H1 (cell line): ENCODE measurements at regions of chr16 and their contacts with region 1.

Region 1: DNA sequence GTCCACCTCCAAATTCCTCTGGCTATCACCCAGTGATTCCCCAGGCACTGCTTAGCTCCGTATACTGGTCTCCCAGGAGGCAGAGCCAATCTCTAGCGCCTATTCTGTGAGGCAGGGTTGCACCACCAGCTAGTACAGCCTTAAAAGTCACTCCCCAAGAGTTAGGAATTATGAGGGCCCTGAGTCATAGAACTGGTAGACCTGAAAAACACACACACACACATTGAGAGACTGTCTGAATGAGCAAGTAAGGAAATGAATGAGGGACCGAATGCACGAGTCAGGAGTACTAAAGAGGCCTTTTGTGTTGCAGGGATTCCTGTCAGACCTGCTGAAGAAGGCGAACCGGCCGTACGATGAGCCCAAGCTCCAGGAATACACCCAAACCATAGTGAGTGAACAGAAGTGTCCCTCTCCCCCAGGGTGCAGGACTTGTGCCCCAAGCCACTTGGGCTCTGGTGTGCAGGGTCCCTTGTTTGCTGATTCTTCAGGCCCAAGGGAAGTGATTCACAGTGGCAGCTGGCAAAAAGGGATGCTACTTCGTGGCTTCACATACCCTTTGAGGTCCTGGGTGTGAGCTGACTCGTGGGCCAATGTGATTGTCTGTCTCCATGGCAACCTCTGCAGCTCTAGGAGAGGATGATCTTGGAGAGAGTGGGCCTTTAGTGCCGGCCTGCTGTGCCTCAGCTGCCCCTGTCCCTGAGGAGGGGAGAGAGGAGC is 24.7 kb downstream of the CALB2 start:
- DNase-seq: no peak
- H3K4me3 ChIP-seq: no peak overlapping the region
- H3K27ac ChIP-seq: no peak overlapping the region
- H3K4me1 ChIP-seq: peaks cover 12 to 20% (median 16%) of the 10 kb centered on the region in 4 experiments; a peak in 5 of 7 replicates
- H3K27me3 ChIP-seq: 0 out of 7 replicates have a peak, but pooled peaks cover 0 to 2% (median 0%) of the 10 kb centered on the region in 4 experiments
- CTCF ChIP-seq: no peak
- EP300 ChIP-seq: no peak
- POLR2A ChIP-seq: no peak
- RAD21 ChIP-seq: no peak

Region 2: GRCh38 chr16:71242601-71243000 is 140.6 kb before region 1 on chr16:
- CTCF ChIA-PET with region 1: no interaction called
- POLR2A ChIA-PET with region 1: no interaction called
- DNase-seq: no peak
- H3K4me3 ChIP-seq: no peak overlapping the region
- H3K27ac ChIP-seq: no peak overlapping the region
- H3K4me1 ChIP-seq: no peaks in the 10 kb centered on the region
- H3K27me3 ChIP-seq: no peaks in the 10 kb centered on the region
- CTCF ChIP-seq: no peak
- EP300 ChIP-seq: no peak
- POLR2A ChIP-seq: no peak
- RAD21 ChIP-seq: no peak

Region 3: DNA sequence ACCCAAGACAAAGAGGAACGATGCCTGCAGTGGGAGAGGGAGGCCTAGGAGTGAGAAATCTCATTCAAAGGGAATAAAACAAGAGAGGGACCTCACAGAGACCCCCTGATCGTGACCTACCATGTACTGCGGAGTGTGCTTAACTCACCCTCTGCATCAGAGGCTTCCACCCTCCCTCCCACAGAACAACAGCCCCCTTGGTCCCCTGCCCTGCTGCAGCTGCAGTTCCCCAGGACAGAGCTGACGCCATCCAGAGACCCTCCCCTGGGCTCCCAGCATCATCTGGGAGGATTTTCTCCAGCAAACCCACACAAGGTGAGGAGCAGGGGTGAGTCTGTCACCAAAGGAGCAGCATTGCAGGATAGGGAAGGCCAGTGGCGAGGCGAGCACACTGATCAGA is 18.8 kb after region 1 on chr16:
- CTCF ChIA-PET with region 1: interaction called, 9 read pairs
- POLR2A ChIA-PET with region 1: interaction called, 11 read pairs
- DNase-seq: no peak
- H3K4me3 ChIP-seq: no peak overlapping the region
- H3K27ac ChIP-seq: no peak overlapping the region
- H3K4me1 ChIP-seq: peaks cover 0 to 15% (median 6%) of the 10 kb centered on the region in 4 experiments; a peak in 6 of 7 replicates
- H3K27me3 ChIP-seq: no peaks in the 10 kb centered on the region
- CTCF ChIP-seq: no peak
- EP300 ChIP-seq: no peak
- POLR2A ChIP-seq: no peak
- RAD21 ChIP-seq: no peak